Activated B cell treated with CpG ODN at 0.5 μM for 24 hours (primary cell): ENCODE measurements at regions of chr19 and their contacts with region 1.

Region 1: DNA sequence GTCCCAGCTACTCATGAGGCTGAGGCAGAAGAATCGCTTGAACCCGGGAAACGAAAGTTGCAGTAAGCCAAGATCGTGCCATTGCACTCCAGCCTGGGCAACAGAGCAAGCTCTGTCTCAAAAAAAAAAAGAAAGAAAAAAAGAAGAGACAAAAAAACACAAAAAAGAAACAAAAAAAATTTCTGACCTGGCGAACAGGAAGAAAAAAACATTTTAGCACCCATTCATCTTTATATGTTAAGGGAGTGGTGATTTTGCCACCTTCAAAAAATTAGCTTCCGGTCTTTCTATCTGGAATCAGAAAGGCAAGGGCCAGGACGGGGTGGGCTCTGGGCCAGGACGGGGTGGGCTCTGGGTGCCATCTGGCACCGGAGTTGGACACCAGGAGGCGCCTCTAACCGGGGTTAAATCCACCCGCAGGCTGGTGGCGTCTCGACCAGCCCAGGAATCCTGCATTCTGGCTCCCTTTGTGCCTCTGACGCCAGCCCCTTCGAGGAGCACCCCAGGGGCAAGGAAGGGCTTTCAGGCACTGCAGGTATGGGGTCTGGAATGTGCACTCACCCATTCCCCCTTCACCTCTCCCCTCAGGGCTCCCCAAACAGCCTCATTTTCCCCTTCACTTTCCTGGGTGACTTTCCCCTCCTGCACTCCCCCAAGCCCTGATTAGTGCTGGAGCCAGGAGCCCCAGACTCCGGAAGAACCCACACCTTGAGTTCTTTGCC is 10.4 kb upstream of the ZSWIM4 start:
- DNase-seq: peak; percentile 62
- ATAC-seq: peak; percentile 70
- H3K4me3 Mint-ChIP-seq: peak overlapping the region; percentile 41
- H3K27ac Mint-ChIP-seq: peak overlapping the region; percentile 76
- H3K4me1 Mint-ChIP-seq: peaks cover 44% of the 10 kb centered on the region
- H3K27me3 Mint-ChIP-seq: no peaks in the 10 kb centered on the region
- CTCF ChIP-seq: no peak

Region 2: GRCh38 chr19:13748169-13748828 is 36.6 kb before region 1 on chr19:
- CTCF ChIA-PET with region 1: no interaction called
- POLR2A ChIA-PET with region 1: interaction called, 11 read pairs
- intact Hi-C with region 1: no loop called
- DNase-seq: no peak
- ATAC-seq: no peak
- H3K4me3 Mint-ChIP-seq: peak overlapping the region; percentile 87
- H3K27ac Mint-ChIP-seq: peak overlapping the region; percentile 85
- H3K4me1 Mint-ChIP-seq: peaks cover 27% of the 10 kb centered on the region
- H3K27me3 Mint-ChIP-seq: no peaks in the 10 kb centered on the region
- CTCF ChIP-seq: no peak

Region 3: DNA sequence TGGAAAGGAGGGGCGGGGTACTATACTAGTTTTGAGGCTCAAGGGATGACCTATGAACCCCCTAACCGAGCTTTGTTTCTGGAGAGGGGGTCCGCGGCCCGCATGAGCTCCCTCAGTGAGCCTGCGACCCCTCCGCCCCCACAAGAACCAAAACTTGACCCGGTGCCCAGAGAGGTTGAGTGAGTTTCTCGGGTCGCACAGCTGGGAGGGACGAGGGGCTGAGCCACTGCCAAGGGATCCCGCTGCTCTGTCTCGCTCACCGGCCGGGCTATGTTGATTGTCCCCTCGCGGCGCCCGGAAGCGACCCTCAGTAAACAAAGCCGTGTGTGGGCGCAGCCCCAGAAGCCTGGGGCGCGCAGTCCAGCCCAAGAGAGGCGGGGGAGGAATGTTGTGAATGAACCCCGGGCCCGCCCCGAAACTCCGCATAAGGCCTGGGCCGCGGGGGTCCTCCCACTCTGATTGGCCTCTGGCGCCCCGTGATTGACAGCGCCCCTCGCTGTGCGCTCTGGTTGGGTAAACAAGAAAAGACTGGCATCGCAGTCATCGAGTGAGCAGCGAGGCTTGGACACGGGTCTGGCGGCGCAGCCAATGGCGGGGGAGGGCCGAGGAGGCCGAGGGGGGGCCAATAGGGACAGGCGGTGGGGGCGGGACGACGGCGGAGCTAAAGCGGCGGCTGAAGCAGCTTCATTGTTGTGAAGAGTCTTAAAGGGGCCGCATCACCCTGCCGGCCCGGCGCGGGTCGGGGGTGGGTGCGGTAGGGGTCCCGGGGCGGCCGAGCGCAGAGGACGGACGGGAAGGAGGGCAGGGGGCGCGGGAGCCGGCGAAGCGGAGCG is 10.1 kb after region 1 on chr19 and contains the start of gene ZSWIM4:
- CTCF ChIA-PET with region 1: interaction called, 6 read pairs
- POLR2A ChIA-PET with region 1: interaction called, 11 read pairs
- intact Hi-C with region 1: no loop called
- DNase-seq: peak; percentile 86
- ATAC-seq: peak; percentile 95
- H3K4me3 Mint-ChIP-seq: peak within 1 kb of the TSS; percentile 98
- H3K27ac Mint-ChIP-seq: peak within 1 kb of the TSS; percentile 91
- H3K4me1 Mint-ChIP-seq: peaks cover 32% of the 10 kb centered on the region
- H3K27me3 Mint-ChIP-seq: no peaks in the 10 kb centered on the region
- CTCF ChIP-seq: no peak
- total RNA-seq, gene ZSWIM4: 8.5 and 11.2 TPM in 2 replicates

Region 4: DNA sequence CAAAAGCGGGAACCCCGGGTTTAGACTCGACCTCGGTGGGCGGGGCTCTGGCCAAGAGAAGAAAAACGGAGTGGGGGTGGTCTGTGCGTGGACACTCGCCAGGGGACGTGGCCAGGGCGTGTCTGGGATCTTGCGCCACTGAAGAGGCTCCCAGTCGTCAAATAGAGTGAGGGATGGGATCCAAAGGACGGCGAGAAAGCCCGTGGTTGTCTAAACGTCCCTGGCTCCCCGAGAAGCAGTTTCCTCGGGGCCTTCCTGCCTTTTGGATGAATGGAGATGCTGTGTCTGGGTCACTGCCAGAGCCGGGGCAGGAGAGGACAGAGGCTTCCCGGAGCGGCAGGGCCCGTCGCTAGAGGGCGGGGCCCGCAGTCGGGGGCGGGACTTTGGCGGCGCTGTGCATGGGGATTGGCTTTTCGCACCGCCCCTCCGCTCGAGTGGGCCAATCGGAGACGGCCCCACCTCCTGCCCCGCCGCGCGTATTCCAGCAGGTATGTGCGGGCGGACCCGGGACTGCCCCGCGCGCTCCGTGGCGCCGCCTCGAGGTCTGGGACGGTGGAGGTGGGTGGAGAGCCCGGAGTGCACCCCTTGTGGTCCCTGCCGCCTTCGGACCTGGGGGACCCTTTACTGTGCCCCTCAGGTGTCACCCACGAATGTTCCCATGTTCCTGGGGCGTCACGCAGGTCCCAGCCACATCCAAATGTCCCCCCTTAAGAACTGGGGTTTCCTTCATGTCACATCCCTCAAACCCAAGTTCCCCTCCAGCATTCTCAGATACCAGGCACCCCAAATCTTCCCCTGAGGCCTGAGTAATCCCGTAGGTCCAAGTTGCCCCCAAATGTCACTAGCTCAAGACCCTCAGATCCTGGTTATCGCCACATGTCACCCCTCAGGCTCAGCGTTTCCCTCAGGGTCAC is 48.7 kb after region 1 on chr19:
- CTCF ChIA-PET with region 1: interaction called, 4 read pairs
- POLR2A ChIA-PET with region 1: interaction called, 33 read pairs
- intact Hi-C with region 1: no loop called
- DNase-seq: peak; percentile 92
- ATAC-seq: peak; percentile 86
- H3K4me3 Mint-ChIP-seq: peak overlapping the region; percentile 90
- H3K27ac Mint-ChIP-seq: peak overlapping the region; percentile 86
- H3K4me1 Mint-ChIP-seq: peaks cover 45% of the 10 kb centered on the region
- H3K27me3 Mint-ChIP-seq: no peaks in the 10 kb centered on the region
- CTCF ChIP-seq: no peak

Region 5: GRCh38 chr19:13846557-13847406 is 61.9 kb after region 1 on chr19:
- CTCF ChIA-PET with region 1: interaction called, 3 read pairs
- POLR2A ChIA-PET with region 1: interaction called, 33 read pairs
- intact Hi-C with region 1: no loop called
- DNase-seq: peak; percentile 92
- ATAC-seq: peak; percentile 56
- H3K4me3 Mint-ChIP-seq: peak overlapping the region; percentile 88
- H3K27ac Mint-ChIP-seq: peak overlapping the region; percentile 98
- H3K4me1 Mint-ChIP-seq: peaks cover 62% of the 10 kb centered on the region
- H3K27me3 Mint-ChIP-seq: peaks cover 3% of the 10 kb centered on the region
- CTCF ChIP-seq: no peak